ENCODE measurements at regions of chr13 and their contacts with region 1.

Region 1: DNA sequence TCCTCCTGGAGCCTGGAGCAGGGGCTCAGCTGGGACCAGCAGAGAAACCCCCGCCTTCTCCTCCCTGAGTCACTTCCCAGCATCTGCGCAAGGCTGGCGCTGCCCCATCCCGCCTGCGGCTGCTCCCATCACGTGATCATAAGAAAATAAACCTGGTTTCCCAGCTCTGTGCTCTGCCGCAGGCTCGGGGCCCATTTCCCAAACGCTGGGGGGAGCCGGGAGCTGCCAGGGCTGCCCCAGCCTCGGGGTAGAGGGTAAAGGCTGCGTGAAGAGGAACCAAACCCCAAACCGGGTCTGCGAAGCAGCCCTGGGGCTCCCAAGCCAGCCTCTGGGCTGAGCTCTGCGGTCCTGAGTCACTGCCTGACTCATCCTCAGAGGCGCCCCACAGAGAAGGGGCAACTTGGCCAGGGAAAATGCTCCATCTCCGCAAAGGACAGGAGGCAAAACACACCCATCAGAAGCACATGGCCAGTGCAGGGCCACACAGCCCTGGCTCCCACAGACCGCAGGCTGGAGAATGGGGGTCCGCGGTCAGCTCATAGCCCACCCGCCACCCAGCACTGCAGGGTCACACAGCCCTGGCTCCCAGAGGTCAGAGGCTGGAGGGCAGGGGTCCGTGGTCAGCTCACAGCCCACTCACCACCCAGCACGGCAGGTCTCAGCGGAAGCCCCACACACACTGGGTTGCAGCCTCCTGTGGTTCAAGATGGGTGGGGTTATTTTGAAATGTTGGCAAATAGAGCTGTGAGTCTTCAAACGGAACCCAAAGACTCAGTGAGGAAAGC is 67.1 kb downstream of the RASA3 start:
- DNase-seq: peak; percentile 89
- H3K4me3 Mint-ChIP-seq: peak overlapping the region; percentile 84
- H3K27ac Mint-ChIP-seq: peak overlapping the region; percentile 93
- H3K4me1 Mint-ChIP-seq: peaks cover 51% of the 10 kb centered on the region
- H3K27me3 Mint-ChIP-seq: no peaks in the 10 kb centered on the region

Region 2: DNA sequence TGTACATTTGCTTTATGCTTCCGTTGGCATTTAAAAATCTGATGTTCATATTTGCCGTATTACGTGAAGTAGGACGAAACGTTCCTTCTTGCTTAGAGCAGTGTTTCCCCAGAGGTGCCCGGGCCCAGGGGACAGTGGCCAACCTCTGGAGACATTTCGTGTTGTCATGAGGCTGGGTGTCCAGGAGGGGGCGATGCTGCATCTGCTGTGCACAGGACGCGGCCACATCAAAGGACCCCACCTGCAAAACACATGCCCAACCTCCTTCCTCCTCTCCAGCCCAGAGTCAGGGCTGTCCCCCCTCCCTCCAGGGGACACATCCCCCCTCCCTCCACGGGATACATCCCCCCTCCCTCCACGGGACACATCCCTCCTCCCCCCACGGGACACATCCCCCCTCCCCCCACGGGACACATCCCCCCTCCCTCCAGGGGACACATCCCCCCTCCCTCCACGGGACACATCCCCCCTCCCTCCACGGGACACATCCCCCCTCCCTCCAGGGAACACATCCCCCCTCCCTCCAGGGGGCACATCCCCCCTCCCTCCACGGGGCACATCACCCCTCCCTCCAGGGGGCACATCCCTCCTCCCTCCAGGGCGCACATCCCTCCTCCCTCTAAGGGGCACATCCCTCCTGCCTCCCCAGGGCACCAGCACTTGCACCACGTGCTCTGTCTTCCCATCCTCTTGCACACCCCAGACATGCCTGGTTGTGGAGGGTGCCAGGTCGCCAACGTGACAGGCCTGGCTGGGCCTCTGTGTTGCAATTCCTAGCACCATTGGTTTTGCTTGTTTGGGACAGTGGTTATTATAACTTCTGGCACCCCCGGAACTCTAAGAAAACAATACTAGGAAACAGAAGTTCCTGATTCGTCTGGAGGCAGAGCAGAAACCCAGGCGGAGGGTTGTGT is 248.1 kb before region 1 on chr13:
- intact Hi-C with region 1: loop called (anchors 1 kb)
- DNase-seq: peak; percentile 96
- H3K4me3 Mint-ChIP-seq: peak overlapping the region; percentile 98
- H3K27ac Mint-ChIP-seq: peak overlapping the region; percentile 78
- H3K4me1 Mint-ChIP-seq: peaks cover 17% of the 10 kb centered on the region
- H3K27me3 Mint-ChIP-seq: no peaks in the 10 kb centered on the region

Region 3: DNA sequence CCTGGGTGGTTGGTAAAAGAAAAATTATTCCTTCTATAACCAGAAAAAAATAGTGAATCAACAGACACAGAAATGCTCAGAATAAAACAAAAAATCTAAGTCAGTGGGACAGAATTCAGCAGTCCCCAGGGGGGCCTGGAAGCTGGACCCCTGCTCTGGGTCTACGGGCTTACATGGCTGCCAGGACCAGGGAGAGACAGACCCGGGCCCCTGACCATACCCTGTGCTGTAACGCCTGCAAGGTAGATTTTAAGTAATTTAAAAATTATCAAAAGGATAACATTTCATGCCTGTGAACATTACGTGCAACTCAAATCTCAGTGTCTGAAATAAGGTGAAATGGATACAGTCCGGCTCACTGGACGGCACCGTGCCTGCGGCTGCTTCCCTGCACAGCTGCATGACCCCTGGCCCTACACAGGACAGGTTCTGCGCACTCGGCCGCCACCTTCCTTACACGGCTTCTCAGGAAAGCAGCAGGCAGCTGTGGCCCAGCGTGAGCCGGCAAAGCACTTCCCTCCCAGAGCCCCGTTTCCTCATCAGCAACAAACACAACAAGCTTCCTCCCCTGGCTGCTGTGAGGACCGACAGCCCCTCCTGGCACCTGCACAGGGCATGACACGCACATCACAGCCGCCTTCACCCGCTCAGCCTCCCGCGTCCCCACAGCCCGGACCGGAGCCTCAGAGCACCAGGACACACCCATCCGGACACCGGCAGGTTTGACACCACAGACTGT is 44.9 kb after region 1 on chr13:
- intact Hi-C with region 1: loop called (anchors 1 kb)
- DNase-seq: peak; percentile 91
- H3K4me3 Mint-ChIP-seq: peak overlapping the region; percentile 88
- H3K27ac Mint-ChIP-seq: peak overlapping the region; percentile 94
- H3K4me1 Mint-ChIP-seq: peaks cover 44% of the 10 kb centered on the region
- H3K27me3 Mint-ChIP-seq: no peaks in the 10 kb centered on the region

Region 4: DNA sequence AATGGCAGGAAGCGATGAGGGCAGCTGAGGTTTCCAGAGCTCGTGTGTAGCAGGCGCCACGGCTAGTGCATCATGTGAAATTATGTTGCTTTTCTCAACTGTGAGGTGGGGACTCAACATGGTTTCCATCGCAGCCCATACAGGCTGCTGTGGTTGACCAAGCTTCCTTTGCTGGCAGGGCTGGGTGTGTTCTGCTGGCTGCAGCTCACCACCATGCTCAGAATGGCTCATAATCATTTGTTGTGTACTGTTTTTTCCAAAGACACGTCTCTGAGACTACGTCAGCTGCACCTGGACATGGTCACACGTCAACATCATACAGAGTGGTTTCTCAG is 83.2 kb after region 1 on chr13:
- intact Hi-C with region 1: loop called (anchors 1 kb)
- DNase-seq: peak; percentile 97
- H3K4me3 Mint-ChIP-seq: peak overlapping the region; percentile 77
- H3K27ac Mint-ChIP-seq: peak overlapping the region; percentile 88
- H3K4me1 Mint-ChIP-seq: peaks cover 78% of the 10 kb centered on the region
- H3K27me3 Mint-ChIP-seq: no peaks in the 10 kb centered on the region

Region 5: GRCh38 chr13:114234645-114235421 is 169.5 kb after region 1 on chr13 and contains the start of gene CDC16:
- intact Hi-C with region 1: loop called (anchors 2 kb)
- DNase-seq: peak; percentile 95
- H3K4me3 Mint-ChIP-seq: peak within 1 kb of the TSS; percentile 92
- H3K27ac Mint-ChIP-seq: peak within 1 kb of the TSS; percentile 92
- H3K4me1 Mint-ChIP-seq: peaks cover 17% of the 10 kb centered on the region
- H3K27me3 Mint-ChIP-seq: peaks cover 4% of the 10 kb centered on the region
- total RNA-seq, gene CDC16: 84.5 and 85.4 TPM in 2 replicates

Measured in activated CD4-positive, alpha-beta T cell treated with anti-CD3 and anti-CD28 coated beads, Interleukin-2, amount 10 ng/mL, durations not matched to agents 24 days and 14 days (primary cell).